ENCODE measurements at regions of chr14 and their contacts with region 1.

Region 1: DNA sequence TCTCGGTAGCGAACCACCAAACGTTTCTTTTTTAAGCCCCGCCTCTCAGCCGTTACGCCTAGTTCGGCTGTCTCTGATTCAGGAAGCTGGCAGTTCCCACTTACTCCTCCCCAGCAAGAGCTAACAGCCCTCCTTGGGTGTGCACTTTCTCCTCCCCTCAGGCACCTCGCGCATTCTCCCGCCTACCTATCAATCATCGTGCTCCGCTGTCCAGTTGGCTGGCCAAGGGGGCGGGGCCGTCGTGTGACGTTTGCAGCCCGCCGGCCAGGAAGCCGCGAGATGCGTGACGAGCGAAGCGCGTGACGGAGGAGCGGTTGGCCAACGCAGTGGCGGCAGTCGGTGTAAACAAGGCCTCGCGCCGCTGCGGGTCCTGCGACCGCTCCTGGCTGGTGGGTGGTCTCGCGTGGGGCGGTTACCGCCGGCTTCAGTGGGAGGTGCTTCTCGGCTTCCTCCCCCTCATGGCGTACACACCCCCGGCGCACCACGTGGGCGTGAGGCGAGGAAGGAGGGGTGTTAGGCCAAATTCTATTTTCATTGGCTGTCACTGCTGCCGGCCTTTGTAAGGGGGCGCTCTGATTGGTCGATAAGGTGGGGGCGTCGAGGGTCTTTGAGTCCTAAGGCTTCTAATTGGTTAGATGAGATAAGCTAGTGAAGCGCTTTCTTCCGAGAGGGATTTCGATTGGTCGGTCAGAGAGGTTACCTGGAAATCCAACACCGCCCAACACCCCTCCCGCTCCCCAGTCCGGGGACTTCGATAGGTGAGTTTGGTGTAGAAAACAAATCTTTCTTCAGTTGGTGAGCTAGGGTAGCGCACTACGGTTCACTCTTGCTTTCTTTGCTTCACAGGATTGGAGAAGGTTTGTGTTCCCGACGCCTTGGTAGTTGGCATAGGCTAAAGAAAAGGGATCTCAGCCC is at the starts of genes DCAF11 and NRL:
- DNase-seq: peak; percentile 96 to 100 (median 99)
- ATAC-seq: peak; percentile 84
- H3K4me3 Mint-ChIP-seq: peak within 1 kb of the TSS; percentile 89 to 99 (median 98)
- H3K27ac Mint-ChIP-seq: peak within 1 kb of the TSS; percentile 95 to 100 (median 99)
- H3K4me1 Mint-ChIP-seq: peaks cover 22 to 39% (median 37%) of the 10 kb centered on the region in 4 donors
- H3K27me3 Mint-ChIP-seq: peaks cover 0 to 4% (median 0%) of the 10 kb centered on the region in 5 donors
- polyA plus RNA-seq, gene DCAF11: 68.0 to 83.8 (median 71.9) TPM
- polyA plus RNA-seq, gene NRL: 3.0 to 3.5 (median 3.1) TPM

Region 2: GRCh38 chr14:23942387-23942986 is 172.3 kb before region 1 on chr14:
- POLR2A ChIA-PET with region 1: no interaction called
- DNase-seq: no peak
- ATAC-seq: no peak
- H3K4me3 Mint-ChIP-seq: no peak overlapping the region
- H3K27ac Mint-ChIP-seq: no peak overlapping the region
- H3K4me1 Mint-ChIP-seq: peaks cover 25 to 30% (median 28%) of the 10 kb centered on the region in 4 donors
- H3K27me3 Mint-ChIP-seq: no peaks in the 10 kb centered on the region

Region 3: DNA sequence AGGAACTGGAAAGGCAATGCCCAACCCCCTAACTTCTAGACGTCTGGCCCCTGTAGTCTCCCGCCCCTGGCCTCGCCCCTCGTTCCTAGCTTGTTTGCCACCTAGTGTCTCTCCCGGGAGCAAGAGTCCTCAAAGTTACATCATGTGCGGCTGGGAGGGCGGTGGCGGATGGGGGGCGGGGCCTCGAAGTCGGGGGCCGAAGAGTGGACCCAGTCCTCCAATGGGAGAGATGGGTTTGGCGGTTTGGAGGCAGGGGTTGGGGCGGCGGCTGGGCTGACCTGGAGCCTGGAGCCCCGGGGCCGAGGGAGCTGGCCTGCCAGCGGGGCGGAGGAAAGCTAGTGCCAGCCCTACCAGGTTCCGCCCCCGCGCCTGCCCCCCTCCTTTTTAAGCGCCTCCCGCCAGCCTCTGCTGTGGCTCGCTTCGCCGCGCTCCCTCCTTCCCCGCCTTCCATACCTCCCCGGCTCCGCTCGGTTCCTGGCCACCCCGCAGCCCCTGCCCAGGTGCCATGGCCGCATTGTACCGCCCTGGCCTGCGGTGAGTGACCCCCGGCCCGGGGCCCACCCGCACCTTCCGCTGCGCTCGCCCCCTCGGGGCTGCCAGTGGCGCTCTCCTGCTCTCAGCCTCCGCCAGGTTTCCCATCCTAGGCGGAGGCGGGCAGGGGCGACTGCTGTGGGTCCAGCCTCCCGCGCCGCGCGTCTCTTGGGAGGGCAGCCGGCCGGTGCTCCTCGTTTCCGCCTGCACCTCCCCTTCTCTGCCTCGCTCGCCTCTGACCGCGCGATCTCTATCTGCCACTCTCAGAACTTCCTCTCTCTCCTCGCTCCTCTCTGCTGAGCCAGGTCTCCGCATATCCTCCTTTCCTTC is 20.7 kb before region 1 on chr14 and contains the start of gene PCK2:
- POLR2A ChIA-PET with region 1: interaction called, 44 read pairs
- DNase-seq: peak; percentile 40 to 78 (median 62)
- ATAC-seq: peak; percentile 78 to 83
- H3K4me3 Mint-ChIP-seq: peak within 1 kb of the TSS; percentile 95 to 99 (median 98)
- H3K27ac Mint-ChIP-seq: peak within 1 kb of the TSS; percentile 93 to 99 (median 97)
- H3K4me1 Mint-ChIP-seq: peaks cover 29 to 40% (median 34%) of the 10 kb centered on the region in 4 donors
- H3K27me3 Mint-ChIP-seq: no peaks in the 10 kb centered on the region
- polyA plus RNA-seq, gene PCK2: 8.6 to 11.6 (median 11.3) TPM

Region 4: DNA sequence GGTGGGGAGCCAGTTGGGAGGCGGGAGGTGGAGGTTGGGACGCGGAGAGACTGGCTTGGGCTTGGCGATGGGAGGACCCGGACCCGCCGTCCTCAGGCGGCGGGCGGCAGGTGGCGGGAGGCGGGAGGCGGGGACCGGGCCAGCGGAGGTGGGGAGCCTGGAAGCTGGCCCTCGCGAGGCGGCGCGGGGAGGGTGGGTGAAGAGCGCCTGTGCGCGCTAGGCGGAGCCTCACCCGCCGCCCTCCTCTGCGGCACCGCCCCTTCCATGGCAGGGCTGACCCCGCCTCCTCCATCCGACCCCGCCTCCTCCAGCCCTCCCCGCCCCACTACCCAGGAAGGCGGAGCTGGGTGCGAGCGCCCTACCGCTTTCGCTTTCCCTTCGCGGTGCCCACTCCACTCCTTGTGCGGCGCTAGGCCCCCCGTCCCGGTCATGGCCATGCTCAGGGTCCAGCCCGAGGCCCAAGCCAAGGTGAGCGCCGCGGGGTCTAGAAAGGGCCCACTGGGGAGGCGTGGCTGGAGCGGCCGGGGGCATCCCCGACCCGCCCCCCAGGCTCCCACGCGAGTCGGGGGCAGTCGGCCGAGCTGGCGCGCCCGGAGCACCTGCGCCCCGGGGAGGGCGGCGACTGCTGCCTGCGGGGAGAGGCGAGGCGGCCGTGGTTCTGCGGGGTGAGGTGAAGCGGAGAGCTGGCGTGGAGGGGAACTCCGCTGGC is 21.2 kb after region 1 on chr14 and contains the start of gene PSME1:
- POLR2A ChIA-PET with region 1: interaction called, 177 read pairs
- DNase-seq: peak; percentile 88 to 96 (median 94)
- ATAC-seq: peak; percentile 88 to 94
- H3K4me3 Mint-ChIP-seq: peak within 1 kb of the TSS; percentile 87 to 98 (median 93)
- H3K27ac Mint-ChIP-seq: peak within 1 kb of the TSS; percentile 86 to 97 (median 94)
- H3K4me1 Mint-ChIP-seq: peaks cover 34 to 69% (median 66%) of the 10 kb centered on the region in 4 donors
- H3K27me3 Mint-ChIP-seq: no peaks in the 10 kb centered on the region
- polyA plus RNA-seq, gene PSME1: 681 to 767 (median 753) TPM

Region 5: DNA sequence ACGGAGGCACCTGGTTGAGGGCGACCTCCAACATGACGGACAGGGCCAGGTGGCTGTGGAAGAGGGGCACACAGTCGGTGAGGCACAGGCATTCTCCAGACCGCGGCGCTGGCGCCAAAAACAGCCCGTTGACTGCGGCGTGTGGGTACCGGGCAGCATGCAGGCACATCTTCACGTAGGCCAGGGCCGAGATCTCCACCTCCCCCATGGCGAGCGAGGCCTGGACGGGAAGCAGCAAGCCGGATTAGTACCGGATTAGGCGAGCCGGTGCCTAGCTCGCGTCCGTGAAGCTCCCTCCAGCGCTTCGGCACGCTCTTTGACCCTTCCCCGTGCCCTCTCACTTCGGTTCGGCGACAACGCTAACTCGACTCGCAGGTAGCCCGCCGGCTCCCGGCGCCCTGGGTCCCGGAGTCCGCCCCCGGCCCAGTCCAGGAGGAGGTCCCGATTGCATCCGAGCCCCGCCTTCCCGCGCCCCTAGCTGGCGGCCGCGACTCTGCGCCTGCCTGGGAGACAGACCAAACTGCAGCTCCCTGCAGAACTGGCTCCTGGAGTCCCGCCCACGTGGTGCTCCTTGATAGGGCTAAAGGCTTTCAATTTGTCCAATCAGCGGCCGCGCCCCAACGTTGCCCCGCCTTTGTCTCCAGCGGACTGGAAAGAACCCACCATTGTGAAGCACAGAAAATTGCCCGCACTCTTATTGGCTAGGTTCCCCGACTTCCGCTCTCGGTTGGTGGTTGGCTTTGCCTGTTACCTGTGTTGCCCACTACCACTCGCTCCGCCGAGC is 26.5 kb after region 1 on chr14 and contains the start of gene EMC9:
- POLR2A ChIA-PET with region 1: interaction called, 177 read pairs
- DNase-seq: peak; percentile 95 to 100 (median 99)
- ATAC-seq: peak; percentile 90 to 93
- H3K4me3 Mint-ChIP-seq: peak within 1 kb of the TSS; percentile 88 to 96 (median 91)
- H3K27ac Mint-ChIP-seq: peak within 1 kb of the TSS; percentile 83 to 97 (median 94)
- H3K4me1 Mint-ChIP-seq: peaks cover 31 to 88% (median 79%) of the 10 kb centered on the region in 4 donors
- H3K27me3 Mint-ChIP-seq: no peaks in the 10 kb centered on the region
- polyA plus RNA-seq, gene EMC9: 7.5 to 9.4 (median 8.4) TPM

Region 6: GRCh38 chr14:24146978-24147760 is 32.4 kb after region 1 on chr14 and contains the start of gene RNF31:
- POLR2A ChIA-PET with region 1: interaction called, 84 read pairs
- DNase-seq: peak; percentile 91 to 98 (median 96)
- ATAC-seq: peak; percentile 87 to 90
- H3K4me3 Mint-ChIP-seq: peak within 1 kb of the TSS; percentile 94 to 100 (median 98)
- H3K27ac Mint-ChIP-seq: peak within 1 kb of the TSS; percentile 91 to 99 (median 96)
- H3K4me1 Mint-ChIP-seq: peaks cover 22 to 71% (median 69%) of the 10 kb centered on the region in 4 donors
- H3K27me3 Mint-ChIP-seq: no peaks in the 10 kb centered on the region
- polyA plus RNA-seq, gene RNF31: 34.1 to 45.3 (median 37.6) TPM

Region 7: DNA sequence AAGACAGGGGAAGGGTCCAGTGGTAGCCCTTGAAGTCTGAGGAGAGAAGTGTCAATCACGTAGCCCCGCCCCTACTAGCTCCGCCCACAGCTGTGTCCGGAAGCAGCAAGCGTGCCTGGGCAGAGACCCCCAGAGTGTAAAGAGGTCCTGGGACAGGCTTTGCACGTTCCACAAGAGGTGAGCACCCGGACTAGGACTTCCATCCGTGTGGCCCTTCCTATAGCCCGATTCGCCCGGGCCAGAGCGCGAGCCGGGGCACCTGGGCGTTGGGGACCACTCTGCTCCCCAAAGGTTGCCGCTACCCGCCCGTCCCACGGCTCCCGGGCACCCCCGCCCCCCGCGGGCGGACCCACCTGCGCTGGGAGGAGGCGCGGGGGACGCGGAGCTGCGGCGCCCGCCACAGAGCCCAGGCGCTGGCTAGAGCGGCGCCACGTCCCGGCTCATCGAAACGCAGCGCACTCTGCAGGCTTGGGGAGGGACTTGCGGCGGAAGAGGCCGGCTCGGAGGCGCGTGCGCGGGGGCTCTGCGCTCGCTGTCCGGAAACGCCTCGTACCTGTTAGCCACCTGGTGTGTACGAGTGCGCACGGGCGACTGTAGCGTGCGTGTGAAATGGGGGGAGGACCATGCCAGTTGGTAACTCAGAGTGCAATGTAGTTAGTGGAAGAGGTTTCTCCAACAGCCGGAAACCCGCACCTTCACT is 156.5 kb after region 1 on chr14 and contains the start of gene RABGGTA:
- POLR2A ChIA-PET with region 1: interaction called, 16 read pairs
- DNase-seq: peak; percentile 87 to 98 (median 94)
- ATAC-seq: peak; percentile 86 to 91
- H3K4me3 Mint-ChIP-seq: peak within 1 kb of the TSS; percentile 78 to 94 (median 92)
- H3K27ac Mint-ChIP-seq: peak within 1 kb of the TSS; percentile 92 to 100 (median 99)
- H3K4me1 Mint-ChIP-seq: peaks cover 31 to 45% (median 41%) of the 10 kb centered on the region in 4 donors
- H3K27me3 Mint-ChIP-seq: no peaks in the 10 kb centered on the region
- polyA plus RNA-seq, gene RABGGTA: 12.7 to 22.1 (median 20.4) TPM

Measured in naive thymus-derived CD8-positive, alpha-beta T cell (primary cell).